Activated CD4-positive, alpha-beta T cell treated with anti-CD3 and anti-CD28 coated beads for 36 hours (primary cell): ENCODE measurements at regions of chr15 and their contacts with region 1.

Region 1: DNA sequence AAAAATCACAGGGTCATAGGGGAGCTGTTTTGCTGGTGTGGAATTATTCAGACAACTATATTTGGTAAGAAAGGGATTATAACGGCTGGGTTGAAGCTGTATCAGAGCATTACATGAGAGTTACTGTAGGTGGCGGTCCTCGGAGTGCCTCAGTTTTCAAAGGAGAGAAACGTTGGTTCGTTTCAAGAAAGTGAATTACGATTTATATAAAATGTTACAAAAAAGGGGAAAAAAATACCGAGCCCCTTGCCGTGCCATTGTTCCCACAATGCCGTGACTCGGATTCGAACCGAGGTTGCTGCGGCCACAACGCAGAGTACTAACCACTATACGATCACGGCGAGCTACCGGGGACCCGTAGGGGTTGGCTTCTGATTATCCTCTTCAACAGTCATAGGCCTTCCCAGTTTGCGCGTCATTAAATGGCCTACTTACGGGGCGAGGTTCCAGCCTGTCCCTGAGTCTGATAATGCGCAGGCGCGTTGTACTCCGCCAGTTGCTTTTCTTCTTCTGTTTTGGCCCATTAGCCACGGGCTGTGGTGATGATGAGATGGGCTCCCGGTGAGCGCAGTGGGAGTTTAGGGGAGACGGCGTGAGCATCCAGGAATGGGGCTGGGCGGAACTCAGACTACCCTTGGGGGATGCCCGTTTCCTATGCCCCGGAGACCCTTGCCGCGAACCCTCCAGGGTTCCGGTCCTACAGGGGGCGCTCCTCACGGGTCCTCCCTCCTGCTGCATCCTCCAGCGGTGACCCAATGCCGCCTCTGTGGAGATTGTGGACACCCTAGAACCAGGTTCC is 10.8 kb upstream of the SHF start:
- DNase-seq: peak; percentile 94
- ATAC-seq: peak; percentile 63
- H3K4me3 Mint-ChIP-seq: no peak overlapping the region
- H3K27ac Mint-ChIP-seq: no peak overlapping the region
- H3K4me1 Mint-ChIP-seq: peaks cover 14% of the 10 kb centered on the region
- H3K27me3 Mint-ChIP-seq: no peaks in the 10 kb centered on the region

Region 2: GRCh38 chr15:44728576-44729407 is 469.7 kb before region 1 on chr15:
- CTCF ChIA-PET with region 1: interaction called, 3 read pairs
- POLR2A ChIA-PET with region 1: no interaction called
- intact Hi-C with region 1: loop called in 1 of 2 experiments (anchors 5 kb)
- DNase-seq: peak; percentile 96
- ATAC-seq: peak; percentile 78
- H3K4me3 Mint-ChIP-seq: peak overlapping the region; percentile 91
- H3K27ac Mint-ChIP-seq: peak overlapping the region; percentile 99
- H3K4me1 Mint-ChIP-seq: peaks cover 68% of the 10 kb centered on the region
- H3K27me3 Mint-ChIP-seq: no peaks in the 10 kb centered on the region

Region 3: DNA sequence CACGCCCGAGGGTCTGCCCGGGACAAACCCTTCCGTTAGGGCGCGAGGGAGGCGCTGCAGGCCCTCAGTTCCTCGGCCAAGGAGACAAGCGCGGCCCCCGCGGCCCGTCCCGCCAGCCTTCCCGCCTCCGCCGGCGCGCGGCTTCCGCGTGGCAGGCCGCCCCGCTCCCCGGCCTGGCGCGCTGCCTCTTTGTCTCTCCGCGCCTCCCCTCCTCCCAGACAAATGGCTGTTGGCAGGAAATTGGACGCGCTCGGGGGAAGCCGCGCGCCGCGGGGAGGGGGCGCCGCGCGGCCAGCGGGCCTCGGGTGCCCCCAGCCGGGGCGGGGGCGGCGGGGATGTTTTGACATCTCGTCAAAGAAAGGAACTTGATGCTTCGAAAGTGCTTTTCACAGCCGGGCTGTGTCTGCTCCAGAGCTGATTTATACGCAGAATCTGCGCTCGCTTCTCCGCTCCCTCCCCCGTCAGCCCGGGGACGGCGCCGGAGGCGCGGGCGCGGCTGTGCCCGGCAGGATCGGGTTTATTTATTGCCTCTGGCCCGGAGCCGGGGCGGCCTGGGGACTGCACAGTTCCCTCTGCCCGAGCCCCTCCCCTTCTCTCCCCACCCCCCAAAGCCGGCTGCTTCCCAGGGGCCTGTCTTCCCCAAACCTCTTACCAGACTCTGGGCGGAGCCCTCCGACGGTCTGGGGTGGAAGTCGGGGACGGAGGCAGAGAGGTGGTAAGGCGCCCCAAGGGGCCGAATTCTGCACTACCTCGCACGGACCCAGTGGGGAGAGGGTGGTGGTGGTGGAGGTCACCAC is 31.5 kb before region 1 on chr15:
- CTCF ChIA-PET with region 1: interaction called, 29 read pairs
- POLR2A ChIA-PET with region 1: interaction called, 5 read pairs
- intact Hi-C with region 1: loop called (anchors 1 kb)
- DNase-seq: peak; percentile 91
- ATAC-seq: peak; percentile 93
- H3K4me3 Mint-ChIP-seq: peak overlapping the region; percentile 69
- H3K27ac Mint-ChIP-seq: peak overlapping the region; percentile 77
- H3K4me1 Mint-ChIP-seq: peaks cover 9% of the 10 kb centered on the region
- H3K27me3 Mint-ChIP-seq: no peaks in the 10 kb centered on the region

Region 4: GRCh38 chr15:45279024-45279698 is 80.6 kb after region 1 on chr15:
- CTCF ChIA-PET with region 1: interaction called, 3 read pairs
- POLR2A ChIA-PET with region 1: no interaction called
- intact Hi-C with region 1: loop called (anchors 1 kb)
- DNase-seq: peak; percentile 97
- ATAC-seq: peak; percentile 100
- H3K4me3 Mint-ChIP-seq: peak overlapping the region; percentile 83
- H3K27ac Mint-ChIP-seq: peak overlapping the region; percentile 83
- H3K4me1 Mint-ChIP-seq: peaks cover 18% of the 10 kb centered on the region
- H3K27me3 Mint-ChIP-seq: peaks cover 1% of the 10 kb centered on the region

Region 5: DNA sequence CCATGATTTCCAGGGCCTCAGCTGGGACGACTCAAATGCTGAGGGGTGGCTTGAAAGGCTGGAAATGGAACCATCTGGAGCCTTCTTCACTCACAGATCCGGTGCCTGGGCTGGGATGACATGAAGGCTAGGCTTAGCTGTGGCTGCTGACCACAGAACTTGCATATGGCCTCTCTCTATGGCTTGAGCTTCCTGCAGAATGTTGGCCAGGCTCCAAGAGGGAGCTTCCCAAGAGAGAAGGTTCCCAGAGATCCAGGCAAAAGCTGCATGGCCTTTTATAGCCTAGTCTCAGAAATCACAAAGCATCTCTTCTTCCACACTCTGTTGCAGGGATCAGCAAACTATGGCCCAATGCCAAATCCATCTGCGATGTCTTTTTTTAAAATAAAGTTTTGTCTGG is 135.0 kb after region 1 on chr15:
- CTCF ChIA-PET with region 1: no interaction called
- POLR2A ChIA-PET with region 1: no interaction called
- intact Hi-C with region 1: no loop called
- DNase-seq: no peak
- ATAC-seq: no peak
- H3K4me3 Mint-ChIP-seq: no peak overlapping the region
- H3K27ac Mint-ChIP-seq: no peak overlapping the region
- H3K4me1 Mint-ChIP-seq: peaks cover 6% of the 10 kb centered on the region
- H3K27me3 Mint-ChIP-seq: no peaks in the 10 kb centered on the region

Region 6: DNA sequence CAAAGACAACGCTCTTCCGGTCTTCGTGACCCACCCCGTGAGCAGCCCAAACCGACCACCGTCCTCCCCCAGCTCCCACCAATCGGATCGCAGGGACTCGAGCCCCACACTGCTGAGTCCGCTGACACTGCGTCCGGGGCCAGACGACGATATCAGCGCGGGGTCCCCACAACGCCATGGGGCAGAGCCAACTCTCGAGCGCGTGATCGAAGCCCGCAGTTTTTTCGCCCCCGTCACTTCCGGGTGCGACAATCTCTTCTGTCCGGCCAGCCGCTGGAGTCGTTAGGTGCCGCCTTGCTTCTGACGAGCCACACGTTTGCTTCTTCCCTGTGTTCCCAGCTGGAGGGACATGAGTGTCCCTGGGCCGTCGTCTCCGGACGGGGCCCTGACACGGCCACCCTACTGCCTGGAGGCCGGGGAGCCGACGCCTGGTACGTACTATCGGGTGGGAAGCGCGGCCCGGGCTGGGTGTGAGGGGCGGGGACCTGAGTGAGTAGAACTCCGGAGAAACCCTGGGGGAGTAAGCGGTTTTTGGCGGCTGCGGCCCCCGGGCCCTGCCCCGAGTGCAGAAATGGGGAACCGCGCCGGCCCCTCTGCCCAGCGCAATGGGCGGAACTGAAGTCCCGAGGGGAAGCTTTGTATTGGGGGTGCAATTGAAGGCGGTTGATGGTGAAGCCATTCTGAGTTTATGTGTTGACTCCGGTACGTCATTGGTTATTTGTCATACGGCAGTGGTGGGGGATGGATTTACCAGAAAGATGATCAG is 388.7 kb after region 1 on chr15 and contains the start of gene BLOC1S6:
- CTCF ChIA-PET with region 1: no interaction called
- POLR2A ChIA-PET with region 1: interaction called, 4 read pairs
- intact Hi-C with region 1: loop called in 1 of 2 experiments (anchors 1 kb)
- DNase-seq: peak; percentile 91
- ATAC-seq: peak; percentile 81
- H3K4me3 Mint-ChIP-seq: peak within 1 kb of the TSS; percentile 94
- H3K27ac Mint-ChIP-seq: peak within 1 kb of the TSS; percentile 100
- H3K4me1 Mint-ChIP-seq: peaks cover 48% of the 10 kb centered on the region
- H3K27me3 Mint-ChIP-seq: no peaks in the 10 kb centered on the region
- total RNA-seq, gene BLOC1S6: 36.1 to 52.5 TPM